ENCODE measurements at regions of chr2 and their contacts with region 1.

Region 1: GRCh38 chr2:174771631-174772471 is 7.6 kb upstream of the CHRNA1 start:
- DNase-seq: peak in 3 of 4 donors; percentile 74 to 84 (median 76)
- ATAC-seq: peak; percentile 97
- H3K4me3 ChIP-seq: no peak overlapping the region
- H3K27ac ChIP-seq: peak overlapping the region; percentile 38 to 46
- H3K4me1 ChIP-seq: peaks cover 6 to 9% of the 10 kb centered on the region in 2 donors
- H3K27me3 ChIP-seq: no peaks in the 10 kb centered on the region
- CTCF ChIP-seq: peak; percentile 68 to 69

Region 2: GRCh38 chr2:174158003-174158402 is 613.8 kb before region 1 on chr2:
- intact Hi-C with region 1: no loop called
- DNase-seq: peak in 1 of 4 donors; percentile 30
- ATAC-seq: peak; percentile 65
- H3K4me3 ChIP-seq: no peak overlapping the region
- H3K27ac ChIP-seq: no peak overlapping the region
- H3K4me1 ChIP-seq: no peaks in the 10 kb centered on the region
- H3K27me3 ChIP-seq: no peaks in the 10 kb centered on the region
- CTCF ChIP-seq: peak in 1 of 2 donors; percentile 42

Region 3: DNA sequence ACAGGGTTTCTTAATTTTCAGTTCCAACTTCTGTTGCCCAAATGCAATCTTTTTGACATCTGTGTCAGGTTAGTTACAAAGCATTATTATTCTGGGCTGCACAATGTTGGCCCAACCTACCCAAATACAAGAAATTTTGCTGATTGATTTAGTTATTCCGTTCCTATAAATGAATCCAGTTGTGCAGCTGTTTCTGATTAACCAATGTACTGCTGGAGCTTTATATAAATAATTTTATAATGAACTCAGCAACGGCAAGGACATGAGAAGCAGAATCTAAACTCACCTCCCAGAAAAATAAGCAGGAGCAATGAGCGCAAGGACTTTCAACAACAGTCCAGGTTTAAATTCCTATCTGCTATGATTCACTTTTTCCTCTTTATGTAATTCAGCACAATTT is 98.0 kb before region 1 on chr2:
- intact Hi-C with region 1: no loop called
- DNase-seq: no peak
- ATAC-seq: no peak
- H3K4me3 ChIP-seq: no peak overlapping the region
- H3K27ac ChIP-seq: no peak overlapping the region
- H3K4me1 ChIP-seq: peaks cover 0 to 5% of the 10 kb centered on the region in 2 donors
- H3K27me3 ChIP-seq: no peaks in the 10 kb centered on the region
- CTCF ChIP-seq: no peak

Region 4: DNA sequence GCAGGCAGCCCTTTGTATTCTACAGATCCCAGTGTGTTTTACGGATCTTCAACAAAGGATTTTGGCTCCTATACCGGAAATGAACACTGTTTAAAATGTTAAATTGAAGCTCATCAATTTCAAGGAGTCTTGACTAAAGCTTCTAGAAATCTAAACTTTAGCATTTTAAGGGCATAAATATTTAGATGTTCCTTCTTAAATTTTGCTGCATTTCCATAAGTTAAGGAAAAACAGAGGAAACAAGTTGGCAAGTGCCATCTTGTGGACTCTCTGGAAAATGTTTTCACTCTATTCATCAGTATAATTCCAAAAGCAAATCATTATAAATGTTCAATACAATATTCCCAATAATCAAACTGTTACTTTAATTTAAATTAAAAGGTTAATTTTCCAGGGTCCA is 213.8 kb after region 1 on chr2:
- intact Hi-C with region 1: loop called in 1 of 2 experiments (anchors 5 kb)
- DNase-seq: peak in 1 of 4 donors; percentile 45
- ATAC-seq: no peak
- H3K4me3 ChIP-seq: no peak overlapping the region
- H3K27ac ChIP-seq: no peak overlapping the region
- H3K4me1 ChIP-seq: peaks cover 0 to 6% of the 10 kb centered on the region in 2 donors
- H3K27me3 ChIP-seq: no peaks in the 10 kb centered on the region
- CTCF ChIP-seq: peak; percentile 25 to 52